PC-9 (cell line): ENCODE measurements at regions of chr1 and their contacts with region 1.

Region 1: DNA sequence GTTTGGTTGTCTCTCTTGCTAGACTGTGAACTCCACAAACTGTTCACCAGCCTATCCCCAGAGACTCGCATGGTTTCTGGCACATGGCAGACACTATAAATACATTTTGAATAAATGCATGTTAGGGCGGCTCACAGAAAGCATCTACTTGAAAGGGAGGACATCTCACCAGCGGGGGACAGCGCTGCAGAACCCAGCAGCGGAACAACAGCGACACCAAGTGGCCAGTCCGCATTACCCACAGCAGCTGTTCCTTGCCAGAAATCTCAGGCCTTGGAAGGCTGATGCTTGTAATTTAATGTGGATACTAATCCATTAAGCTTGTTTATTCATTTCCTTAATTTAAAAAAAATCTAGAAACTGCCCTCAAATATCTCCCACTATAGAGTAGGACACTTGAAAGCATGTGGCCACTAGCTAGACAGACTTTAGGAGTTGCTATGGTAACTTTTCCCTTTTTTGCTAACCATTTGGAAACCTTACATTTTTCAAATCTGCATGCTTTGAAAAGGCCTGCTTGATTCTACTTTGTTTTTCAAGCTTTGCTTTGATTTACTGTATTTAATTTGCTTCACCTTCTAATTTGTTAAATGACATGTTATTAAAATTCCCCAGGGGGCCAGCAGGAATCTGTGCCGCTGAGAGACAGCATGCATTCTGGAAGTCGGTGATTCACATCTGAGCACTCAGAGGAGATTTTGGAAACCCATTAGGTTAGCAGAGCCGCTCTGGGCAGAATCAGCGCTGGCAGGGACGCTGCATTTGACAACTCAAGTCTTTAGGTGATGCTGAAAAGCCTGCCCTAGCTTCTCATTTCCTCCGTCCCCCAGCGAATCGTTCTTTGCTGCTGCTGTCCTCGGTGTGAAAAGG is 63.5 kb upstream of the SSX2IP start:
- DNase-seq: peak; percentile 62 to 66
- H3K4me3 ChIP-seq: no peak overlapping the region
- H3K27ac ChIP-seq: no peak overlapping the region
- H3K4me1 ChIP-seq: no peaks in the 10 kb centered on the region
- H3K27me3 ChIP-seq: no peaks in the 10 kb centered on the region
- CTCF ChIP-seq: peak; percentile 99

Region 2: DNA sequence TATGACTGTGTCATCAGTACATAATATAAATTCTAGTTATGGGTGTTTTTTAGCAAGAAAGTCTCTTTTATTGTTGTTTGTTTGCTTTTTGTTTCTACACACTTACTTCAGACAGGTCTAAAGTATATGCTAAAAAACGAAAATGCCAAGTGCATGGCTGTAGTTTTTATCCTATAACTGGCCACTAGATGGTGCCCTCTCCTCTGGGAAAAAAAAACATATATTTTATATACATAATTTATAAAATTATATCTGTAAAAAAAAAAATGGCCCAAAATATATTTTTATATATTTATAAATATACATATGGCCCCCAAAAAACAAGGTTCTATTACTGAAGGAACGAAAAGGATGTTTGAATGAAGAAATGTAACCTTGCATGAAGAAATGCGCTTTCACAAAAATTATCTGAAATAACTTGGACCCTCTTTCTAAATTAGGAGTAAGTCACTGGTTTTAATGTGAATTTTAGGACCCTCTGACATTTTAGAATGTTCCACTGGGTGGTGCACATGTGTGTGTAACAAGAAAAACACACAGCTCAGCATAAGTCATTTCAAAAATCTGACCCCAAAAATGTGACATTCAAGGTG is 848.3 kb before region 1 on chr1:
- CTCF ChIA-PET with region 1: no interaction called
- POLR2A ChIA-PET with region 1: no interaction called
- intact Hi-C with region 1: loop called (anchors 2 kb)
- DNase-seq: no peak
- H3K4me3 ChIP-seq: no peak overlapping the region
- H3K27ac ChIP-seq: no peak overlapping the region
- H3K4me1 ChIP-seq: peaks cover 17% of the 10 kb centered on the region
- H3K27me3 ChIP-seq: no peaks in the 10 kb centered on the region
- CTCF ChIP-seq: peak; percentile 80

Region 3: DNA sequence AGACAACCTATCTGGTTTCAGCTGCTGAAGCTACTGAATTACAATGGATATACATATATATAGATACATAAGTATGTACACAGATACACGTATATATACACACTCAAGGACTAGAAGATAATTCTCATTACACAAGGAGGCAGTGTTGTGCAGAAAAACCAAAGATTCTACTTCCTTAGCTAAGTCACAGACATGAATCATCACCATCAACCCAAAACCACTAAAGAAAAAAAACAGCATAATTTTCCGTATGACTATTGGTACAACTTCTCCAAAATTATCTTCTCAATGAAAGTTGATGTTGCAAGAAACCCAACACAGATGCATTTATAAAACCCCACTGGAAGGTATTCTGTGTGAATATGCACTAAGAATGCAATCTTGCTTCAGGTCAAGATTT is 311.5 kb before region 1 on chr1:
- CTCF ChIA-PET with region 1: no interaction called
- POLR2A ChIA-PET with region 1: no interaction called
- intact Hi-C with region 1: loop called (anchors 2 kb)
- DNase-seq: peak in 1 of 2 experiments; percentile 83
- H3K4me3 ChIP-seq: no peak overlapping the region
- H3K27ac ChIP-seq: no peak overlapping the region
- H3K4me1 ChIP-seq: peaks cover 10% of the 10 kb centered on the region
- H3K27me3 ChIP-seq: no peaks in the 10 kb centered on the region
- CTCF ChIP-seq: peak; percentile 80

Region 4: DNA sequence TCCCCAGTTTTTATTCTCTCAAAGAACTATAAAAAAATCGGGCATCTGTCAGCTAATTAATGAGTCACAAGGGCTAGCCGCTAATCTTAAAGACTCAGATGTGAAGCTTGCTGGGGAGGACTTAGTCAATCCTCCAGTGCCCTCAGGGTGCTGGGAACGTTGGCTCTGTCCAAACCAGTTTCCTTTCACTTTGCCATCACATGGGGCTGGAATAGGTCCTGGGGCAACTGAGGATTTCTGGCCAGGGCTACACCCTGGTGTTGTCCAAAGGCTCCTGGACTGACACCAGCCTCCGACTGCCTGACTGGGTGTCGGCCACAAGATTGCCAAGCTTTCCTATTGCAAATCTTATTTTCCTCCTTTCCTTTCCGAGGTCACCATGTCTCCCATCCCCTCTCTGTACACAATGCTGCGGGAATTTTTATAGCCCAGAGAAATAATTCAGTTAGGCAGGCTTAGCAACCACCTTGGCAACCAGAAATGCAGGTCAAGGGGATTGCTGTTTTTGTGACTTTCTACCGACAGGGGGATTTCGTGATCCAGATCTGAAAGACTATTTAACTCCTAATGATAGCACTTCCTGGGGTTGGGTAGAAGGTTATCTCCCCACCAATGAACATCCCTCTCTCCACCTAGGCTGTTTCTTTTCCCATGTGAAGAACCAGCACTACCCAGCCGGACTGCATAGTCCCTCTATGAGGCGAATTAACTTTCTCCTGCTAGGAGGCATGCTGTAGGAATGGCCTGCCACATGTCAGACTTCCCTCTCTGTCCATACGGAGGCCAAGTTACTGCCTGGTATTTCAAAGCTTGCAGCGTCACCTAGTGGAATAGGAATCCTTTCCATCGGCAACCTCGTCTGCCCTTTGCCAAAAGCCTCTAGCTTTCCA is 149.6 kb before region 1 on chr1:
- CTCF ChIA-PET with region 1: no interaction called
- POLR2A ChIA-PET with region 1: no interaction called
- intact Hi-C with region 1: loop called (anchors 1 kb)
- DNase-seq: peak; percentile 74 to 97
- H3K4me3 ChIP-seq: peak overlapping the region; percentile 52
- H3K27ac ChIP-seq: peak overlapping the region; percentile 60
- H3K4me1 ChIP-seq: peaks cover 36% of the 10 kb centered on the region
- H3K27me3 ChIP-seq: no peaks in the 10 kb centered on the region
- CTCF ChIP-seq: peak; percentile 92

Region 5: GRCh38 chr1:84620720-84621313 is 132.9 kb before region 1 on chr1:
- CTCF ChIA-PET with region 1: no interaction called
- POLR2A ChIA-PET with region 1: no interaction called
- intact Hi-C with region 1: loop called (anchors 5 kb)
- DNase-seq: peak; percentile 56 to 86
- H3K4me3 ChIP-seq: peak overlapping the region; percentile 75
- H3K27ac ChIP-seq: peak overlapping the region; percentile 29
- H3K4me1 ChIP-seq: peaks cover 10% of the 10 kb centered on the region
- H3K27me3 ChIP-seq: no peaks in the 10 kb centered on the region
- CTCF ChIP-seq: peak; percentile 97

Region 6: DNA sequence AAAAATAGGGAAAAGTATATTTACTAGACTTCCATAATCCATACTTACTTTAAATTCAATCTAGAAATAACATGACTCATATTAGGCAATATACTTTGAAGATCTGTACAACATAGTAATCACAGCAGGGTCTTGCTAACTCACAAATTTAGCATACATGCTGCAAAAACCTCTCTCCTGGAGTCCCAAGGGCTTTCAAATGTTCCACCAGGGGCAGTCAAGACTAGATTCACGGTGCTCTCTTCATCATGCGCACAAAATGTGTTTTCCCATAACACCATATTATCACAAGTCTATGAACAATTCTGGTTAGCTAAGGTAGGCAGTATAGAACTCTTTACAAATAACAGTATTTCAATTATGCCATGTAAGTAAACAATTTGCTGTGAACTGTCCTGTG is 109.3 kb before region 1 on chr1:
- CTCF ChIA-PET with region 1: no interaction called
- POLR2A ChIA-PET with region 1: no interaction called
- intact Hi-C with region 1: no loop called
- DNase-seq: no peak
- H3K4me3 ChIP-seq: no peak overlapping the region
- H3K27ac ChIP-seq: no peak overlapping the region
- H3K4me1 ChIP-seq: no peaks in the 10 kb centered on the region
- H3K27me3 ChIP-seq: no peaks in the 10 kb centered on the region
- CTCF ChIP-seq: no peak

Region 7: DNA sequence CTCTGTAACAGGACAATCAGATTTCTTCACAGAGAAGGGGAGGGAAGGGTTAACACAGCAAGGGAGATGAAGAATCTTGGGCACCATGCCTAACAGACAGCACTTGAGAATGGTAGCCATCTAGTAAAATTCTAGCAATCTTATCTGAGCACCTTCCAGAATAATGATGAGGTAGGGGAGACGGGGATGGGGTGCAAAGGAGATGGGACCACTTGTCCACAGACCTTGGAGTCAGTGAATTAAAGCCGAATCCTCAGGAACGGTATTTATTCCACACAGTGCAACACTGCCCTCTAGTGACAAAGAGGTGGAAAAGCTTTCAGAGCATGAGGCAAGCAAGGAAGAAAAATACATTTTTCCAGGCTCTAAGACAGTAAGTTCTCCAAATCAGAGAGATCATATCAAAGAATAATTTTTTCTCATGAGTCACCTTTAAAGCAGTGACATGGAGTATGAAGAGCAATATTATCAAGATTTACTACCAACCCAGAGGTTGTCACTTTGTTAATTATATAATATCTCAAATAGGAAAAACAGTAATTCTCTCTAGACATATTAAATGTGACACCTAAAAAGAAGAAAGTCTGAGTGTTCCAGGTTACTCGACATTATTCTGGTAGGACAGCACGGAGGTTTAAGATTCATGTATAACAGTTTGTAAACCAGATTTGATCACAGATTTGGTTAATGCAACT is 182.5 kb after region 1 on chr1:
- CTCF ChIA-PET with region 1: no interaction called
- POLR2A ChIA-PET with region 1: no interaction called
- intact Hi-C with region 1: loop called (anchors 5 kb)
- DNase-seq: peak; percentile 20 to 56
- H3K4me3 ChIP-seq: no peak overlapping the region
- H3K27ac ChIP-seq: no peak overlapping the region
- H3K4me1 ChIP-seq: no peaks in the 10 kb centered on the region
- H3K27me3 ChIP-seq: no peaks in the 10 kb centered on the region
- CTCF ChIP-seq: peak; percentile 98